Activated B cell treated with CpG ODN at 0.5 μM for 24 hours (primary cell): ENCODE measurements at regions of chr12 and their contacts with region 1.

Region 1: DNA sequence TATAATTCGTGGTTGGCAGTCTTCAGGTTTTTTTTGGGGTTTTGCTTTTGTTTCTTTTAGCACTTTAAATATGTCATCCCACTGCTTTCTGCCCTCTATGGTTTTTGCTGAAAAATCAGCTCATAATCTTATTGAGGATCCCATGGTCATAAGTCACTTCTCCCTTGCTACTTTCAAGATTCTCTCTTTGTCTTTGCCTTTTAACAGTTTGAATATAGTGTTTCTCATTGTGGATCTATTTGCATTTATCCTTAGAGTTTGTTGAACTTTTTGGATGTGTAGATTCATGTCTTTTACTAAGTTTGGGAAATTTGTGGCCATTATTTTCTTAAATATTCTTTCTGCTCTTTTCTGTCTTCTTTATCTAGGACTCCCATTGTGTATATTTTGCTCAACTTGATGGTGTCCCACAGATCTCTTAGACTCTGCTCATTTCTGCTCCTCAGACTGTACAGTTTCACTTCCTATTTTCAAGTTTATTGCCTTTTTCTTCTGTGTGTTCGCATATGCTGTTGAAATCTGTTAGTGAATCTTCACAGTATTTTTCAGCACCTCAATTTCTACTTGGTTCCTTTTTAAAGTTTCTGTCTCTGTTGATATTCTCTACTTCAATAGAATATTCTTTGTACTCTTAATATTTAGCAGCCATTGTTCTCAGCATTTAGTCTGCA is 70.8 kb downstream of the WNK1 start:
- DNase-seq: no peak
- ATAC-seq: peak; percentile 98
- H3K4me3 Mint-ChIP-seq: peak overlapping the region; percentile 3
- H3K27ac Mint-ChIP-seq: peak overlapping the region; percentile 79
- H3K4me1 Mint-ChIP-seq: peaks cover 49% of the 10 kb centered on the region
- H3K27me3 Mint-ChIP-seq: no peaks in the 10 kb centered on the region
- CTCF ChIP-seq: no peak

Region 2: GRCh38 chr12:143964-144649 is 679.1 kb before region 1 on chr12:
- CTCF ChIA-PET with region 1: no interaction called
- POLR2A ChIA-PET with region 1: no interaction called
- intact Hi-C with region 1: no loop called
- DNase-seq: no peak
- ATAC-seq: no peak
- H3K4me3 Mint-ChIP-seq: no peak overlapping the region
- H3K27ac Mint-ChIP-seq: no peak overlapping the region
- H3K4me1 Mint-ChIP-seq: peaks cover 6% of the 10 kb centered on the region
- H3K27me3 Mint-ChIP-seq: peaks cover 20% of the 10 kb centered on the region
- CTCF ChIP-seq: no peak

Region 3: GRCh38 chr12:575948-576612 is 247.1 kb before region 1 on chr12:
- CTCF ChIA-PET with region 1: interaction called, 64 read pairs
- POLR2A ChIA-PET with region 1: no interaction called
- intact Hi-C with region 1: no loop called
- DNase-seq: peak; percentile 91
- ATAC-seq: peak; percentile 99
- H3K4me3 Mint-ChIP-seq: peak overlapping the region; percentile 75
- H3K27ac Mint-ChIP-seq: no peak overlapping the region
- H3K4me1 Mint-ChIP-seq: peaks cover 11% of the 10 kb centered on the region
- H3K27me3 Mint-ChIP-seq: no peaks in the 10 kb centered on the region
- CTCF ChIP-seq: peak; percentile 70

Region 4: DNA sequence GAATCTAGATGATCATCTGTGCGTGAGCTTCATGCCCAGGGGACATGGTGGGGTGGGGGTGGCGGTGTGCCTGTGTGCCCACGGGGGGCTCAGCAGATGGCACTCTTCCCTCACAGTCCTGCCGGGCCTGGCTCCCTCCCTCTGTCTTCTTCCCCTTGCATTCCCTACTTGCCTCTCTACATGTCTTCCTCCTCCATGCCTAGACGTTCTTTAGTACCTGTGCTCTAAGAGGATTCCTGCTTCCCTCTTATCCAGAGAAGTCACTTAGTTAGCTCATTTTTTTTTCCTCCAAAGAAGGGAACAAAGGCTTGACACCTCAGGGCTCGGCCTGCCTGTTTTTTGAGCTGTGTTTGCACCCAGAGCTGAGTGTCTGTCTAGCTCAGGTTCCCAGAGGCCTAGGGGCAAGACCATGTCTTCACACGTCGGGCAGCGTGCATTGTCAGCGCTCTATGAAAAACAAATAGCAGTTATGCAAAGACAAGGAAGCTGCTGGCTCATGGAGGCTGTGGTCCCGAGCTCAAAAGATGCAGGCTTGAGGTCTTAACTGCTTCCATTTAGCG is 208.7 kb before region 1 on chr12:
- CTCF ChIA-PET with region 1: interaction called, 103 read pairs
- POLR2A ChIA-PET with region 1: no interaction called
- intact Hi-C with region 1: no loop called
- DNase-seq: peak; percentile 38
- ATAC-seq: peak; percentile 73
- H3K4me3 Mint-ChIP-seq: no peak overlapping the region
- H3K27ac Mint-ChIP-seq: no peak overlapping the region
- H3K4me1 Mint-ChIP-seq: peaks cover 25% of the 10 kb centered on the region
- H3K27me3 Mint-ChIP-seq: no peaks in the 10 kb centered on the region
- CTCF ChIP-seq: no peak

Region 5: GRCh38 chr12:843609-844008 is 20.4 kb after region 1 on chr12:
- CTCF ChIA-PET with region 1: no interaction called
- POLR2A ChIA-PET with region 1: interaction called, 3 read pairs
- intact Hi-C with region 1: loop called (anchors 2 kb)
- DNase-seq: no peak
- ATAC-seq: no peak
- H3K4me3 Mint-ChIP-seq: no peak overlapping the region
- H3K27ac Mint-ChIP-seq: no peak overlapping the region
- H3K4me1 Mint-ChIP-seq: peaks cover 23% of the 10 kb centered on the region
- H3K27me3 Mint-ChIP-seq: no peaks in the 10 kb centered on the region
- CTCF ChIP-seq: no peak

Region 6: DNA sequence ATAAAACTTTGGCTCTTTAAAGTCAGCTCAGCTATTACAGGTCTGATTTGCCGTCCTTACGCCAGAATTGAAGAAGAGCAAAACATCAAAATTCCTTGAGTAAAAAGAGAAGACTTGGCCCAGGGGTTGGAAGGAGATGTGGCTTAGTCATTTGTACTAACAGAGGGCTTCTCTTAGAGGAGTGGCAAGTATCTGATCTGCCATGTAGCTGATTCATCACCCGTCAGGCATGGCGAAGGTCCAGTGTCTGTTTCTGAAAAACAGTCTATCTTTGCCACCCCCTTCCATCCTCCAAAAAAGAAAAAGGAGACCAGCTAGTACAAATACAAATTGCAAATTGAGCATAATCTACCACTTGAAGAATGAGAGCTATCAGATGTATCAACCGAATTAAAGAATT is 34.4 kb after region 1 on chr12:
- CTCF ChIA-PET with region 1: no interaction called
- POLR2A ChIA-PET with region 1: no interaction called
- intact Hi-C with region 1: loop called (anchors 5 kb)
- DNase-seq: no peak
- ATAC-seq: no peak
- H3K4me3 Mint-ChIP-seq: no peak overlapping the region
- H3K27ac Mint-ChIP-seq: no peak overlapping the region
- H3K4me1 Mint-ChIP-seq: no peaks in the 10 kb centered on the region
- H3K27me3 Mint-ChIP-seq: no peaks in the 10 kb centered on the region
- CTCF ChIP-seq: no peak

Region 7: DNA sequence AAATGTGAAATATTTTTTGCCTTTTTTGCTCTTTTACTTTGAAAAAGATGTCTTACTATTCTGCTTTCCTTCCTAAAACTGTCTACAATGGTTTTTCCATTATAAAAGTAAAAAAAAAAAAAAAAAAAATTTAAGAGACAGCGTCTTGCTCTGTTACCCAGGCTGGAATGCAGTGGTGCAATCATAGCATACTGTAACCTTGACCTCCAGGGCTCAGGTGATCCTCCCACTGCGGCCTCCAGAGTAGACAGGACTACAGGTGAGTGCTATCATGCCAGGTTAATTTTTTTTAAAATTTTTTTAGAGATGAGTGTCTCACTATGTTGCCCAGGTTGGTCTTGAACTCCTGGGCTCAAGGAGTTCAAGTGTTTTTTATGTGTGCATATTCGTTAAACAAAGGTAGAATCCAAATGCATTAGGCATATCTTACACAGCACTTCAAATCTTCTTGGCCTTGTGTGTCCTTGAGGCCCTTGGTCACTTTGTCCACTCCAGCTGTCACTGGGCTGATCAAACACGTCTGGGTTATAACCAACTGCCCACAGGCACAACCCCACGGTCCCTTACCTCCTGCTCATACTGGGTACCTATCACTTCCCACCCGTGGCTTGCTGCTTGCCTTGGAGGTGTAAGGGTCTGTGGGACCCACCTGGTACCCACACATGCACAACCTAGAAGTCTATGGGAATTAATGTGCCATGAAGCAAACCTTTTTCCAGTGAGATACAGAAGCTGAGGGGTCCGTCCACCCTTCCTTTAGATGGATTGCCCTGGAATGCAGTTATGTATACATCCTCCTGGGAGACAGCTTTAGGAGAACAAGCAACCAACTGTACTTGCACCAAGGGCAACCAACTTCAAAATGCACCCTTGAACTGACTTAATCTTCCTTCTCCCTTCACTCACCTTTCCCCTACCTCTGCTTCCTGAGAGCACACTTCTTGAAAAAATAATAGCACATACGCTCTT is 113.5 kb after region 1 on chr12:
- CTCF ChIA-PET with region 1: no interaction called
- POLR2A ChIA-PET with region 1: interaction called, 14 read pairs
- intact Hi-C with region 1: no loop called
- DNase-seq: no peak
- ATAC-seq: no peak
- H3K4me3 Mint-ChIP-seq: no peak overlapping the region
- H3K27ac Mint-ChIP-seq: no peak overlapping the region
- H3K4me1 Mint-ChIP-seq: no peaks in the 10 kb centered on the region
- H3K27me3 Mint-ChIP-seq: no peaks in the 10 kb centered on the region
- CTCF ChIP-seq: no peak

Region 8: DNA sequence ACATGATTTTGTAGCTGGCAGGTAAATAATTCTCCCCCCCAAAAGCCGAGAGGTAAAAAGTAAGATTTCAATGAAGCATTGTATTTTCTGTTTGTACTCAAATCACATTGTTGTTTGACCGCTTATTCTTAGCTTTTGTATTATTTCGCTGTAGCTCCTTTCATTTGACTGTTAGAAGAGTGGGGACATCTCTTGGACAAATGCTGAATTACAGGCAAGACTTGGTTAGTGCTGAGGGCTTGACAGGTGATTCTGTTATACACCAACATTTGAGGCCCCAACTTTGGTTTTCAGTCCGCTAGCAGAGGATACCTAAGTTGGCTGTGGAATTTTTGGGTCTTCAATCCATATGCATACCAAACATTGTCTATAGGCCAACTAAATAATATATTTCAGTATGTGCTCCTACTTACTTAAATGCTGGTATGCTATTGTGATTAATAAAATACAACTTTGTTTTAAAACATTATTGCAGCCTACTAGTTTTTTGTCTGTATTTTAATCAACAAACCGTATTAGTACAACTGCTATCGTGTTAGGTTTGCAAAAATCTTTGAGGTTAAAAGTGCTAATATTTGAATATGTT is 270.1 kb after region 1 on chr12:
- CTCF ChIA-PET with region 1: interaction called, 51 read pairs
- POLR2A ChIA-PET with region 1: no interaction called
- intact Hi-C with region 1: loop called (anchors 5 kb)
- DNase-seq: no peak
- ATAC-seq: peak; percentile 80
- H3K4me3 Mint-ChIP-seq: no peak overlapping the region
- H3K27ac Mint-ChIP-seq: no peak overlapping the region
- H3K4me1 Mint-ChIP-seq: peaks cover 2% of the 10 kb centered on the region
- H3K27me3 Mint-ChIP-seq: no peaks in the 10 kb centered on the region
- CTCF ChIP-seq: no peak